Stomach (tissue), 19 donors: ENCODE measurements at regions of chr1 and their contacts with region 1.

Region 1: DNA sequence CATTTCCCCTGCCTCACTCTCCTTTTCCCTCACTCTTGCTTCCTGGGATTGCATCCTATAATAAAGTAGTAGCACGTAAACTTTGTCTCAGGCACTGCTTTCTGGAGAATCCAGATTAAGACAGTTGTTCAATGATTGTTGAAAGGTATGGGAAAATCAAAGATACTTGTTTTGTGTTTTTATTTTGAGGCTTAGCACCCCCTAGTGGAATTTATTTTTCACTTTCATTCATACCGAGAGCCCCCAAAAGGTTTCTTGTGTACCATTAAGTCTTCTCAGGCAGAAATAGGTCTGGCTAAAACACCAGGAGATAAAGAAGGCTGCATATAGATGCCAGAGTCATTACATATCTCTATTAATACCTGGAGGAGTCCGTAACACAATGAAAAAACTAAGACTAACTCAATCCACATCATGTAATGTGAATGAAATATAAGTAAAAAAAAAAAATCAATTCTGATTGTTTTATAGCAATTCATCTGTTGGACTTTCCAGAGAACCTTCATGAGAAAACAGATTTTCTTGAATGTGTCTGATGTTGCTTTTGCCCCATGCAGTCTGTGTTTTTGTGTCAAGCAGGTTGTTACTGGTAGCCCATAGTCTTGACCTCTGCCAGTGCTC is 103.5 kb downstream of the RPE65 start:
- DNase-seq: peak in 1 of 2 donors; percentile 40
- H3K4me3 ChIP-seq: no peak overlapping the region
- H3K27ac ChIP-seq: no peak overlapping the region
- H3K4me1 ChIP-seq: peaks cover 0 to 10% (median 3%) of the 10 kb centered on the region in 4 donors
- H3K27me3 ChIP-seq: no peaks in the 10 kb centered on the region
- CTCF ChIP-seq: peak in 3 of 7 experiments; percentile 28 to 42 (median 34)
- EP300 ChIP-seq: no peak
- POLR2A ChIP-seq: no peak

Region 2: DNA sequence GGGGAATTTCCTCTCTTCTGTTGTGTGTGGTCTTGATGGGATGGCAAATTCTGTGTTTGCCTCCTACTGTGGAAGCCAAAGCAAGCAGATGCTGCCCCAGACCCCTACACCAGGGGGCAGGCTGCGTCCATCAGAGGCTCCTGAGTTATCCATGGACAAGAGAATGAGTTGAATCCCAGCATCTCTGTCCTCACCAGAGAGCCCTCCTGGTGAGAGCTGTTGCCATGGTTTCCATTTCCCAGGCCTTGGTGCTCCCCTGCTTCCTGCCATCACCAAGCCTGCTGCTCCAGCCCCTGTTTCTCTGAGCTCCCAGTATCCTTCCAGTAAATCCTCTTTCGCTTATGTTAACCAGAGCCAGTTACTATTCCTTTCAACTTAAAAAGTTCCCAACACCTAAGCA is 492.6 kb before region 1 on chr1:
- intact Hi-C with region 1: loop called (anchors 10 kb)
- DNase-seq: peak; percentile 51 to 77
- H3K4me3 ChIP-seq: no peak overlapping the region
- H3K27ac ChIP-seq: no peak overlapping the region
- H3K4me1 ChIP-seq: peaks cover 0 to 16% (median 8%) of the 10 kb centered on the region in 4 donors
- H3K27me3 ChIP-seq: no peaks in the 10 kb centered on the region
- CTCF ChIP-seq: peak in 5 of 7 experiments; percentile 41 to 58 (median 51)
- EP300 ChIP-seq: no peak
- POLR2A ChIP-seq: no peak